Endothelial cell of umbilical vein (primary cell): ENCODE measurements at regions of chr1 and their contacts with region 1.

Region 1: DNA sequence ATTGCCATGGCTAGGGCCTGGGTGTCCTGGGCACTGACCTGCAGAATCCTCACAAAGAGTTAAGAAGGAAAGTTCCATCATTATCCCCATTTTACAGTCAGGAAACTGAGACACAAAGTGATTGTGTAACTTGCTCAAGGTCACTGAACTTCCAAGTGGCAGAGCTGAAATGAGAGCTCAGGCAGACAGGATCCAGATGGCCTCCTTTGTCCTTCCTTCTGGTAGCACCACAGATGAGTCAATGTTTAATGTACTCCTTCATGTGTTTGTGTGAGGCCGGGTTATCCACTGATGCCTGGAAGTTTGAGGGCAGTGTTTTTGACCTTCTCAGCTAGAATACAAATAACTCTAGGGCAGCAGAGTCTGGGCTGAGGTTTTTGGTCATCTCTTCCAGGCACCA is 207.0 kb downstream of the TNR start:
- DNase-seq: peak; percentile 95
- H3K4me3 ChIP-seq: no peak overlapping the region
- H3K27ac ChIP-seq: peak overlapping the region; percentile 91
- H3K4me1 ChIP-seq: peaks cover 30% of the 10 kb centered on the region
- H3K27me3 ChIP-seq: no peaks in the 10 kb centered on the region
- CTCF ChIP-seq: no peak
- POLR2A ChIP-seq: peak; percentile 84

Region 2: DNA sequence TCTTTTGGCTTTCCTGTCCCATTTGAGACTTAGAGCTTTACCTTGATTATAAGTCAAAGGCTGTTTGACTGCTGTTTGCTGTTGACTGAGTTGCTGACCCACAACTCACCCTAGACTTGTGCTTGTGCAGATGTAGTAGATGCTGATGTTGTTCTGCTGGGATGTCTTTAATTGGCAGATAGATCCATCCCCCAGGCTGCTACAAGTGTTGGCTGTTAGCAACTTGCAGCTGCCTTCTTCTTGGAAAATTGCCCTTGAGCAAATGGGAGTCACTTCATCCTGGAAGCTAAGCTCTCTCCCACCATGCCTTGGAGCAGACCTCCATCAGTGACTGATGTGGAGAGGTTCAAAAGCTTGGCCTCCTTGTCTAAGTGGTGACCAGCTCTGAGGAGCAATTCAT is 204.5 kb before region 1 on chr1:
- CTCF ChIA-PET with region 1: no interaction called
- POLR2A ChIA-PET with region 1: no interaction called
- dilution Hi-C with region 1: no loop called
- intact Hi-C with region 1: no loop called
- DNase-seq: no peak
- H3K4me3 ChIP-seq: no peak overlapping the region
- H3K27ac ChIP-seq: no peak overlapping the region
- H3K4me1 ChIP-seq: peaks cover 6% of the 10 kb centered on the region
- H3K27me3 ChIP-seq: peaks cover 0 to 6% of the 10 kb centered on the region in 2 experiments
- CTCF ChIP-seq: no peak
- POLR2A ChIP-seq: no peak

Region 3: DNA sequence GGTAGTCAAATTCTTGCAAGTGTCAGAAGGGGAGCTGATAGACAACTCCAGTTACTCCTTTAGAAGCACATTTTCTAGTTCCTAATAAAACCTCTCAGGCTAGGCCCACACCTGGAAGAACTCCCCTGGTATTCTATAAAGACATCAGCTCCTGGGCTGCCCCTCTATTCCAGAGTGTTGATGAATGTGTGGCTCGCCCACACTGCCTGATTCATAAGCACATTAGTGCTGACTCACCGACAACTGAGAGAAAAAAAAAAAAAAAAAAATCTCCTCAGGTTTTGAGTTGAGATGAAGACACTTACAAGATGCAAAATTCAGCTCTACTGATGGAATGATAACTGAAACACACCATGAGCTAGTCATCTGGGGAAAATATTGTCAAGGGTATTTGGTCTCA is 18.9 kb after region 1 on chr1:
- CTCF ChIA-PET with region 1: no interaction called
- POLR2A ChIA-PET with region 1: no interaction called
- dilution Hi-C with region 1: no loop called
- intact Hi-C with region 1: loop called (anchors 1 kb)
- DNase-seq: peak; percentile 19
- H3K4me3 ChIP-seq: no peak overlapping the region
- H3K27ac ChIP-seq: no peak overlapping the region
- H3K4me1 ChIP-seq: no peaks in the 10 kb centered on the region
- H3K27me3 ChIP-seq: no peaks in the 10 kb centered on the region
- CTCF ChIP-seq: no peak
- POLR2A ChIP-seq: no peak

Region 4: DNA sequence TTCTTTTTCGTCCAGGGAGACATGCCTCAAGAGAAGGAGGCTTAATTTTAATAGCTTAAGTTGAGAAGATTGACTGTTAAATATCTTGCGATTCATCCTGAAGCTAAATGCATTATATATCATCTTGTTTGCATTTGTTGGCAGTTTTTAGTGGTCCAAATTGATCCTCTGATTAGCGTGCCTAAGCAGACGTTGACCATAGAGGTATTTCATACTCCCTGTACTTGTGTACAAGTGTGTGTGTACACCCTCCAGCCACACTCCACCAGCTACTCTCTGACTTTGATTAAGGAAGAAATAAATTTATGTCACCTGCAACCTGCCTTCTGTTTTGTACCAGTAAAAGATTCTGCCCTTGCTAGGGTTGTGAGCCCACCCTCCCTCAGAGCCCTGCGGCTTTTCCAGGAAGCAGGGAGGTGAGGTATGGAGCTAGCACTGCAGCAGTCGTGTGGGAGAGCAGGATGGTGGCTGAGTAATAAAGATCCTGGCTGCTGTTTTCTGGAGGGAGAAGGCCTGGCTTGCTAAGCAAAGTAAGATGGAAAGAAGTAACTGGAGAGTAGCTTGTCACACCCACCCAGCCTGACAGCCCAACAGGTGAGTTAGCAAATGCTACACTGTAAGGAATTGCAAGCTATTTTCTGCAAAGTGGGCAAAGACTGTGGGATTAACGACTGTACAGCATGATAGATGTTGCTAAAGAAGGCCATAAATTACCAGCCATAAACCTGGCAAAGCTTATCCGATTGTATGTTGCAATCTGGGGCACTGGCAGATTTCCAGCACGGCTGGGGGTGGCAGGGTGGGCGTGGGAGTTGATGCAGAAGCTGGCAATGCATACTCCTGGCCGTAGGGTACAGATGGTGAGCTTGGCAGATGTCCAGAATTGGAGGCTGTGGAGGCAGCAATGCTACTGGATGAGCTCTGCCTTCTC is 36.8 kb after region 1 on chr1:
- CTCF ChIA-PET with region 1: no interaction called
- POLR2A ChIA-PET with region 1: no interaction called
- dilution Hi-C with region 1: no loop called
- intact Hi-C with region 1: no loop called
- DNase-seq: peak; percentile 21
- H3K4me3 ChIP-seq: no peak overlapping the region
- H3K27ac ChIP-seq: no peak overlapping the region
- H3K4me1 ChIP-seq: no peaks in the 10 kb centered on the region
- H3K27me3 ChIP-seq: peaks cover 0 to 3% of the 10 kb centered on the region in 2 experiments
- CTCF ChIP-seq: no peak
- POLR2A ChIP-seq: no peak

Region 5: DNA sequence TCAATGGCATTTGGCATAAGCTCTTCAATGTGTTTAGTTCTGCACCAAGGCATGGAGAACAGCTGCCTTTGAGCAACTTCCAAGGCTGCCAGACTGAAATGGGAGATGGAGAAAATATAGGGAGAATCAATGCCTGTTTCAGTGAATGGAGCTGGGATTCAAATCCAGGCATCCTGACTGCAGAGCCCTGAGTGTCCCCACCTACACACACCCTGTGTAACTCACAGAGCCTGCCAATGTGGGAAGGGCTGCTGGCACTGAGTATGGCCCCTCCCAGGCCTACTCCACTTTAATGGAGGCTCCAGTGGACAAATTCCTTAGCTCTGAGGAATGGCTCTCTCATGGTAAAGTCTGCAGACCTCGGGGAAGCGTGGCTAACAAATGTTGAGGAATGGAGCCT is 352.6 kb after region 1 on chr1:
- CTCF ChIA-PET with region 1: no interaction called
- POLR2A ChIA-PET with region 1: no interaction called
- dilution Hi-C with region 1: no loop called
- intact Hi-C with region 1: no loop called
- DNase-seq: no peak
- H3K4me3 ChIP-seq: no peak overlapping the region
- H3K27ac ChIP-seq: no peak overlapping the region
- H3K4me1 ChIP-seq: no peaks in the 10 kb centered on the region
- H3K27me3 ChIP-seq: no peaks in the 10 kb centered on the region
- CTCF ChIP-seq: no peak
- POLR2A ChIP-seq: no peak